ENCODE measurements at regions of chr1 and their contacts with region 1.

Region 1: DNA sequence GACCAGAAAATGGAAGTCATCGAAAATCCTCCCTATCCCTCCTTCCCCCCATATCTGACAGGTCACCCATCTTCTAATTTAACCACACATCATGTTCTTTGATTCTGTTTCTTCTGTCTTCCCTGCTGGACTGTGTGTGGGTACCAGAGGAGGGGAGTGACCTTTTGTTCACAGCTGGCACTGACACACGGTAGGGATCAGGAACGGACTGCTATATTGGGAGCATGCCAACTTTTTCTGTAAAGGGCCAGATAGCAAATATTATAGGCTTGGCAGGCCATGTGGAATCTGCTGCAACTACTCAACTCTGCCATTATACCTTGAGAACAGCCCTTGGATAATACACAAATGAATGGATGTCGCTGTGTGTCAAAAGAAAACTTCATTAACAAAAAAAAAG is 7.5 kb upstream of the TOMM20 start:
- DNase-seq: no peak
- H3K4me3 ChIP-seq: no peak overlapping the region
- H3K27ac ChIP-seq: no peak overlapping the region
- H3K4me1 ChIP-seq: no peaks in the 10 kb centered on the region
- H3K27me3 ChIP-seq: no peaks in the 10 kb centered on the region
- CTCF ChIP-seq: no peak

Region 2: GRCh38 chr1:235239851-235240250 is 103.7 kb after region 1 on chr1:
- CTCF ChIA-PET with region 1: no interaction called
- POLR2A ChIA-PET with region 1: interaction called, 15 read pairs
- intact Hi-C with region 1: no loop called
- DNase-seq: no peak
- H3K4me3 ChIP-seq: no peak overlapping the region
- H3K27ac ChIP-seq: no peak overlapping the region
- H3K4me1 ChIP-seq: no peaks in the 10 kb centered on the region
- H3K27me3 ChIP-seq: no peaks in the 10 kb centered on the region
- CTCF ChIP-seq: no peak